Common myeloid progenitor, CD34-positive (primary cell): ENCODE measurements at regions of chr7 and their contacts with region 1.

Region 1: GRCh38 chr7:140653319-140654108 is 12.9 kb upstream of the DENND2A start:
- DNase-seq: peak; percentile 35 to 52 (median 45)
- H3K4me3 ChIP-seq: no peak overlapping the region
- H3K27ac ChIP-seq: no peak overlapping the region
- H3K4me1 ChIP-seq: peaks cover 2 to 17% (median 16%) of the 10 kb centered on the region in 4 experiments
- H3K27me3 ChIP-seq: no peaks in the 10 kb centered on the region

Region 2: GRCh38 chr7:140517546-140518369 is 135.8 kb before region 1 on chr7:
- CTCF ChIA-PET with region 1: interaction called, 13 read pairs
- POLR2A ChIA-PET with region 1: no interaction called
- DNase-seq: peak; percentile 64 to 70 (median 68)
- H3K4me3 ChIP-seq: no peak overlapping the region
- H3K27ac ChIP-seq: no peak overlapping the region
- H3K4me1 ChIP-seq: peaks cover 0 to 3% (median 2%) of the 10 kb centered on the region in 4 experiments
- H3K27me3 ChIP-seq: peaks cover 0 to 4% (median 0%) of the 10 kb centered on the region in 5 experiments